GM13977 (cell line): ENCODE measurements at regions of chr20 and their contacts with region 1.

Region 1: DNA sequence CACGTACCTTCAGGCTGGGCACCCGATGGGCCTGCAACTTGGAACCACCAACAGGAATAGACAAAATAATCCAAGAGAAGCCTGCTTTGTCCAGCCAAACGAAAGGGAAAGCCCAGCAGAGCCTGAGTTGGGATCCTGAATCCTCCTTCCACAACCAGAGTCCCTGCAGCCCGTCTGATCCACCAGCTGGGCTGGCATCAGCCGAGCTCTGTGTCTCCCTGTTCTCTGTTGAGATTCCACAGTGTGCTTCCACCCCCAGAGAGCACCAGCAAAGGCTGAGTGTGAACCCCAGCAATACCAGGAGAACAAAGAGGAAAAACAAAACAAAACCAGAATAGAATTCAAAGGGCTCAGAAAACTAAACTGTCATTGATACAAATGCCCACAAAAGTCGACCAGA is 104.2 kb upstream of the PRND start:
- DNase-seq: no peak
- CTCF ChIP-seq: no peak

Region 2: DNA sequence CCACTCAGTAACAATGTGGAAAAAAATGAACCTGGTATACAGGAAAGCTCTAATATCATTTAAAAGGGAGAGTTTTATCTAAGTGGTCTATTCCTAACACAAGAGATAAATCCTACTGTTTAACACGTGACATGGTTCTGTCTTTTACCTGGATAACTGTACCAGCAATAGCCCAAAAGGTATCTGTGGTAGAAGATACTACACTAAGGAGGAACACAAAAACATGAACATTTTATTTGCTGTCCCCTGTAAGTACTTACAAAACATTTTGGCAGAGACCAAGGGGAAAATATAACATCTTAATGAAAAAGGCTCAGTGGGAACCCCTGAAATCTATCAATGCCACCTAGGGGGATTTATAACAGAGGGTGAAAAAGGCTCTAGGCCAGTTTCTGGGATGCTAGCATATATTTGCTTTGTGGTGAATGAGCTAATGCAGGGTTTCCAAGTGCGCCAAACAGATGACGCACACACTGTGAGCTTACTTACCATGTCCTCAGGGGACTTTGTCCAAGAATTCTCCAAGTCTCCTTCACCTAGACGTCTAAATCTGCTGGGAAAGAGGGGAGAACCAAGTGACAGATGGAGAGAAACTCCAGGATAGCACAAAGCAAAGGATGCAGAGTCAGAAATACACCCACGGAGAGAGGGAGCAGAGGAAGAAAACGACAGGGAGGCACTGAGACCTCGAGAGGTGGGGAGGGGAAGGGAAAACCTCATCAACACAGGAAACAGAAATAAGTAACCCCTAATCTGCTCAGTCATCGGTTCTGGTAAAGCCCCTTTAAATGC is 43.7 kb before region 1 on chr20:
- in situ Hi-C with region 1: no loop called
- DNase-seq: no peak
- CTCF ChIP-seq: no peak

Region 3: DNA sequence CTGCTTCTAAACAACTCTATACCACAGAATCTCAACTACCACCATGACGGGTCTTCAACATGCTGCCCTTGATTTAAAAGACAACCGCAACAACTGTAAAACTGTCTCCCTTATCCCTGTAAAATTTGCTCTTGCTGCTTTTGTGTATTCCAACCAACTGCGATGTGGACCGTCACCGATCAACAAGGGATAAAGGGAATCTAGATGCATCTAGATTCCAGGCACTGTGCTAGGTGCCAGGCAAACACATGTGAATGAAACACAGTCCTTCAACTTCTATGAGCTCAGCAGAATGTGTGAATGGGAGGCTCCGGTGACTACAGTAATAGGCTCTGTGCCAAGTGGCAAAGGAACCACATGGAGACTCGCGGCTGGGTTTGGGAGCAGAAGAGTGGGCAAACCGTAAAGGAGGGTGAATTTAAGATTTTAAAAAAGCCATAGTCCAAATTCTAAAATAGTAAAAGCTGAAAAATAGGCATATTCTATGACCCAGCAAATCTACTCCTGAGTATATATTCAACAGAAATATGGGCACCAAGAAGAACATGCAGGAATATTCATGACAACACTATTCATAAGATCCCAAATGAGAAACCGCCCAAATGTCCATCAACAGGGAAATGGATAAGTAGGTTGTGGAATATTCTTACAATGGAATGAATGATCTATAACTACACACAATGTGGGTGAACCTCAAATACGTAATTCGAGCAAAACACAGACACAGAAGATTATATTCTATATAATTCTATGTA is 100.5 kb after region 1 on chr20:
- in situ Hi-C with region 1: loop called (anchors 5 kb)
- DNase-seq: no peak
- CTCF ChIP-seq: no peak